ENCODE measurements at regions of chr7 and their contacts with region 1.

Region 1: DNA sequence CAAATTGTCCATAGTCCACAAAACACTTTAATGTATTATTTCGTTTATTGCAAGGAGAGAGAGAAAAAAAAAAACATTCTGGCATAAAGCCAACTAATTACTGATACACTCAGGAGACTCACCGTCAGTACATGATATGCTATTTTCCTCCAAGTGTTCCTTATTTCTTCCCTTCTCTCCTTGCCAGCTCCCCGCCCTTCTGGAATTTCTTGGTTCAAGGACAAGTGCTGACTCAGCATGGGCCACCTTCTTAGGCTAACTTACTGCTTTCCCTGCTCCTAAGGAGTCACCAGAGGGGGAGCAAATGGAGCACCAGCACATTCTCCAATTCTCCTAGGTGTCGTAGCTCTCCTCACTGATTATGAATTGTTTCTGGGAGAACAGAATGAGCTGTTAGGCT is 133.8 kb upstream of the HDAC9 start:
- DNase-seq: no peak
- ATAC-seq: peak in 1 of 2 donors; percentile 38

Region 2: DNA sequence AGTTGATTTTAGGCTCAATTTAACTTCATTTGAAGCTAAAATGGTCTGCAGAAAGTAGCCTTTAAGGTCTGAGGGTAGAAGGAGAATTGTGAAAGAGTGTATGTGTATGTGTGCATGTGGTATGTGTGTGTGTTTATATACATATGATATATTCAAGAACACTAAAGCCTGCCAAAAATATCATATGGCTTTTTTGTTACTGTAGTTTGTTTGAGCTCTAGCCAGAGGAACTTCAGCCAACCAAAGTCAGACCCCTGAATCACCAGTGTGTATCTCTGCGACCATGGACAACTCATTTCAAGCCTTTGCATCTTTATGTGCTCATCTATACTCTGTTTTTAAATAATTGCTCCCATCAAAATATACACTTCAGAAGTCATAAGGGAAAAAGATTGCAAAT is 75.3 kb after region 1 on chr7:
- intact Hi-C with region 1: loop called in 1 of 2 experiments (anchors 10 kb)
- DNase-seq: no peak
- ATAC-seq: no peak

Measured in left cardiac atrium (tissue), 4 donors.